ENCODE measurements at regions of chr11 and their contacts with region 1.

Region 1: DNA sequence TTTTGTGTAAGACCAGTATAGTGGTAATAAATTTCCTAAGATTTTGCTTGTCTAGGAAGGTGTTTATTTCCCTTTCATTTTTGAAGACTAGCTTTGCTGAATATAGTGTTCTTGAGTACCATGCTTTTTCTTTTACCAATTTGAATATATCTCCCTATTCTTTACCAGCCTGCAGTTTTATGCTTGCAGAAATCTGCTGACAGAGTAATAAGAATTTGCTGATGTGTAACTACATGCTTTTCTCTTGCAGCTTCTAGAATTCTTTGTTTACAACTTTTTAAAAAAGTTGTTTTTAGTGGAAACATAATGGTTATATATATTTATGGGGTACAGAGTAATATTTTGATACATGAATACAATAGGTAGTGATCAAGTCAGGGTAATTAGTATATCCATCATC is 324.8 kb upstream of the FOLH1 start:
- DNase-seq: no peak
- ATAC-seq: no peak
- H3K4me3 ChIP-seq: no peak overlapping the region
- H3K27ac ChIP-seq: no peak overlapping the region
- H3K4me1 ChIP-seq: no peaks in the 10 kb centered on the region
- H3K27me3 ChIP-seq: no peaks in the 10 kb centered on the region
- CTCF ChIP-seq: no peak
- EP300 ChIP-seq: no peak
- POLR2A ChIP-seq: no peak
- RAD21 ChIP-seq: no peak

Region 2: GRCh38 chr11:48172818-48173609 is 1360.2 kb before region 1 on chr11:
- CTCF ChIA-PET with region 1: no interaction called
- POLR2A ChIA-PET with region 1: no interaction called
- in situ Hi-C with region 1: no loop called
- intact Hi-C with region 1: loop called (anchors 10 kb)
- DNase-seq: peak; percentile 43
- ATAC-seq: peak; percentile 98
- H3K4me3 ChIP-seq: no peak overlapping the region
- H3K27ac ChIP-seq: no peak overlapping the region
- H3K4me1 ChIP-seq: no peaks in the 10 kb centered on the region
- H3K27me3 ChIP-seq: no peaks in the 10 kb centered on the region
- CTCF ChIP-seq: peak; percentile 89
- EP300 ChIP-seq: no peak
- POLR2A ChIP-seq: no peak
- RAD21 ChIP-seq: peak; percentile 63

Region 3: GRCh38 chr11:48307760-48308386 is 1225.3 kb before region 1 on chr11:
- CTCF ChIA-PET with region 1: no interaction called
- POLR2A ChIA-PET with region 1: no interaction called
- in situ Hi-C with region 1: no loop called
- intact Hi-C with region 1: loop called (anchors 5 kb)
- DNase-seq: peak; percentile 53
- ATAC-seq: peak; percentile 88
- H3K4me3 ChIP-seq: no peak overlapping the region
- H3K27ac ChIP-seq: no peak overlapping the region
- H3K4me1 ChIP-seq: no peaks in the 10 kb centered on the region
- H3K27me3 ChIP-seq: no peaks in the 10 kb centered on the region; a peak in 1 of 5 replicates
- CTCF ChIP-seq: peak; percentile 87
- EP300 ChIP-seq: no peak
- POLR2A ChIP-seq: no peak
- RAD21 ChIP-seq: peak; percentile 42; the same call in 1 of the 2 replicates

Region 4: DNA sequence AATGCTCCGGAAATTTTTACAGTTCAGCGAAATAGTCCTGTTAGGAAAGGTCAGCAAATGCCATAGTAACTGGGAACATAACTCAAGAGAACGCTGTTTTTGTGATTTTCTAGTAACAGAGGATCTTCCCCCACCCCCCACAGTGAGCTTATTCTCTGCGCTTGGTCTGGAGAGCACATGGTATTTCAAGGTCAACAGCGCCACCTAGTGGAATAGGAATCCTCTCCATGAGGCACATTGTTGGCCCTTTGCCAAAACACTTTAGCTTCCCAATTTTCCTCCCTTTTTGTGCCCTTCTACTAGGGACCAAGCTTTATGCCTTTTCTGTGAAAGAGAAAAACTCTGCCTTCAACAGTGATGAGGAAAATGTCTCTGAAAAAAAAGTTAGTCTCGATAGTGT is 462.4 kb after region 1 on chr11:
- CTCF ChIA-PET with region 1: no interaction called
- POLR2A ChIA-PET with region 1: no interaction called
- in situ Hi-C with region 1: no loop called
- intact Hi-C with region 1: loop called (anchors 10 kb)
- DNase-seq: peak; percentile 73
- ATAC-seq: peak; percentile 89
- H3K4me3 ChIP-seq: no peak overlapping the region
- H3K27ac ChIP-seq: no peak overlapping the region
- H3K4me1 ChIP-seq: no peaks in the 10 kb centered on the region
- H3K27me3 ChIP-seq: no peaks in the 10 kb centered on the region
- CTCF ChIP-seq: peak; percentile 76
- EP300 ChIP-seq: no peak
- POLR2A ChIP-seq: no peak
- RAD21 ChIP-seq: peak; percentile 52

Measured in HepG2 (cell line).